IMR-90 (cell line): ENCODE measurements at regions of chr6 and their contacts with region 1.

Region 1: DNA sequence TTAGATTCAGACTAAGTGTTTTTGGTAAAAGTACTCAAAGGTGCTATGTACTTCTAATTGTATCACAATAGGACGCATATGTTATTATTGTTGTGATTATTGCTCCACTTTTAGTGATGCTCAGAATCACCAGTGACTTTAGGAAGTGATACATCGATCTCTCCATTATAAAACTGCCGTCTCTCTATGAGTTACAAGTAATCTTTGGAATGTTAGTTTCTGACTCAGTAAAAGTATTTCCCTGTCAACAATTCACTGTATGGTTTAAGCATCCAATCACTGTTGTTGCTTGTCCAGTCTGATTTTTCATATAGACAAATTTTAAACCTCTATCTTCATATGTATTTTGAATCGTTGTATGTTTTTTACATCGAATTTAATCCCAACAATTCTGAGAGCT is 9.4 kb downstream of the DCBLD1 start:
- DNase-seq: peak; percentile 58
- ATAC-seq: peak; percentile 60
- H3K4me3 ChIP-seq: no peak overlapping the region
- H3K27ac ChIP-seq: no peak overlapping the region
- H3K4me1 ChIP-seq: peaks cover 32% of the 10 kb centered on the region
- H3K27me3 ChIP-seq: no peaks in the 10 kb centered on the region
- CTCF ChIP-seq: no peak
- POLR2A ChIP-seq: no peak
- RAD21 ChIP-seq: no peak

Region 2: GRCh38 chr6:117506180-117506835 is 14.4 kb after region 1 on chr6:
- CTCF ChIA-PET with region 1: no interaction called
- POLR2A ChIA-PET with region 1: interaction called, 3 read pairs
- dilution Hi-C with region 1: no loop called
- in situ Hi-C with region 1: no loop called
- intact Hi-C with region 1: loop called (anchors 2 kb)
- DNase-seq: peak; percentile 83
- ATAC-seq: peak; percentile 86
- H3K4me3 ChIP-seq: no peak overlapping the region
- H3K27ac ChIP-seq: peak overlapping the region; percentile 86; the same call in 1 of the 2 replicates
- H3K4me1 ChIP-seq: peaks cover 26% of the 10 kb centered on the region
- H3K27me3 ChIP-seq: no peaks in the 10 kb centered on the region
- CTCF ChIP-seq: no peak
- POLR2A ChIP-seq: no peak
- RAD21 ChIP-seq: no peak

Region 3: DNA sequence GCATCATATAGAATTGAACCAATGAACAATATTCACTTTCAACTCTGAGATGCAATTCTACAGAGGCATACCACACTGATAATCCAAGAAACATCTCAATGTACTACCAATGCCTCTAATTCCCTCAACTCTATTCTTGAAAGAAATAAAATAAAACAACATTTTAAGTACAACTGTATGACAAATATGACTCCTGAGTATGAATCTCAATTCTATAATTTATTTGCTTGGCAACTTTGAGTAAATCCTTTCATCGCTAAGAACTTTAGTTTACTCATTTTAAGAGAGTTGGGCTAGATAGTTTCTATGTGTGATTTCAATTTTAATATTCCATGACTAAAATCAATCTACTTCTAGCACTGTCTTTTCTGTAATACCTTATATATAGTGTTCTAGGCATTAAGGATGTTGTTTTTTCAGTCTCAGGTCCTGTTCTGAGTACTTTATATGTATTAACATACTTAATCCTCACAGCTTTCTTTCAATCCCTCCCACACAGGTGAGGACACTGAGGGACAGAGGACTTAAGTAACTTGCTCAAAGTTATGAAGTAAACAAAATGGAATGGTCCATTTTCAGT is 77.0 kb after region 1 on chr6:
- CTCF ChIA-PET with region 1: no interaction called
- POLR2A ChIA-PET with region 1: no interaction called
- dilution Hi-C with region 1: no loop called
- in situ Hi-C with region 1: no loop called
- intact Hi-C with region 1: no loop called
- DNase-seq: no peak
- ATAC-seq: no peak
- H3K4me3 ChIP-seq: no peak overlapping the region
- H3K27ac ChIP-seq: no peak overlapping the region
- H3K4me1 ChIP-seq: no peaks in the 10 kb centered on the region
- H3K27me3 ChIP-seq: no peaks in the 10 kb centered on the region
- CTCF ChIP-seq: no peak
- POLR2A ChIP-seq: no peak
- RAD21 ChIP-seq: no peak